ENCODE measurements at regions of chr6 and their contacts with region 1.

Region 1: DNA sequence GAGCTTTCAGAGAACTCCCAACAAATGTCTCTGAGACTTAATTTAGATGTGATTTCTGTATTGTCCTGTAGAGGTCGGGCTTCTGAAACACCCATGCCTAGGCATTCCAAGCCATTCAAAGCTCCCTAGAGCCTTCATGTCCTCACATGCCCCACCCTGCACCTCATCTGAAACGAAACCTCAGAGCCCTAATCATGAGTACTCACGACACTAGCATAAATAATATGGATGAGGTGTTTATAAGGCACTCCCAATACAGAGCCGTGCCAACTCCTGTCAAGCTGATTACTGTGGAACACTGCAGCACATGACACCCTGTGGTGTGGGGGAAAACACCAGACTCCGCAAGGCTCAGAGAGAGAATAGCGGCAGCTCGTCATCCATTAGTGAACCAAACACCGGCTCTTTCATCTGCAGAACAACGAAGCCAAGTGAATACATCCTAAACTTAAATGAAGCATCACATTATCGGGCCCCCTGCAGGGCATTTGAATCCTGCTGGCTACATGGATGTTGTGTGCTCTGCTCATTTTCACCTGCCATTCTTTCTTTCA is 83.8 kb downstream of the FNDC1 start:
- DNase-seq: peak; percentile 22
- H3K4me3 Mint-ChIP-seq: no peak overlapping the region
- H3K27ac Mint-ChIP-seq: no peak overlapping the region
- H3K4me1 Mint-ChIP-seq: no peaks in the 10 kb centered on the region
- H3K27me3 Mint-ChIP-seq: peaks cover 12% of the 10 kb centered on the region

Region 2: GRCh38 chr6:159008656-159009288 is 244.3 kb before region 1 on chr6:
- CTCF ChIA-PET with region 1: no interaction called
- intact Hi-C with region 1: loop called (anchors 10 kb)
- DNase-seq: no peak
- H3K4me3 Mint-ChIP-seq: no peak overlapping the region
- H3K27ac Mint-ChIP-seq: no peak overlapping the region
- H3K4me1 Mint-ChIP-seq: peaks cover 29% of the 10 kb centered on the region
- H3K27me3 Mint-ChIP-seq: no peaks in the 10 kb centered on the region

Region 3: GRCh38 chr6:159463119-159463829 is 210.2 kb after region 1 on chr6:
- CTCF ChIA-PET with region 1: interaction called, 8 read pairs
- intact Hi-C with region 1: loop called (anchors 10 kb)
- DNase-seq: no peak
- H3K4me3 Mint-ChIP-seq: no peak overlapping the region
- H3K27ac Mint-ChIP-seq: no peak overlapping the region
- H3K4me1 Mint-ChIP-seq: peaks cover 2% of the 10 kb centered on the region
- H3K27me3 Mint-ChIP-seq: peaks cover 14% of the 10 kb centered on the region

Region 4: GRCh38 chr6:159540152-159540551 is 287.1 kb after region 1 on chr6:
- CTCF ChIA-PET with region 1: no interaction called
- intact Hi-C with region 1: no loop called
- DNase-seq: no peak
- H3K4me3 Mint-ChIP-seq: no peak overlapping the region
- H3K27ac Mint-ChIP-seq: no peak overlapping the region
- H3K4me1 Mint-ChIP-seq: no peaks in the 10 kb centered on the region
- H3K27me3 Mint-ChIP-seq: peaks cover 2% of the 10 kb centered on the region

Region 5: GRCh38 chr6:159608961-159609651 is 356.1 kb after region 1 on chr6:
- CTCF ChIA-PET with region 1: interaction called, 3 read pairs
- intact Hi-C with region 1: loop called (anchors 5 kb)
- DNase-seq: peak; percentile 51
- H3K4me3 Mint-ChIP-seq: no peak overlapping the region
- H3K27ac Mint-ChIP-seq: no peak overlapping the region
- H3K4me1 Mint-ChIP-seq: no peaks in the 10 kb centered on the region
- H3K27me3 Mint-ChIP-seq: no peaks in the 10 kb centered on the region

Region 6: GRCh38 chr6:159654483-159655098 is 401.6 kb after region 1 on chr6:
- CTCF ChIA-PET with region 1: interaction called, 17 read pairs
- intact Hi-C with region 1: loop called (anchors 1 kb)
- DNase-seq: no peak
- H3K4me3 Mint-ChIP-seq: no peak overlapping the region
- H3K27ac Mint-ChIP-seq: no peak overlapping the region
- H3K4me1 Mint-ChIP-seq: no peaks in the 10 kb centered on the region
- H3K27me3 Mint-ChIP-seq: no peaks in the 10 kb centered on the region

Measured in activated naive CD4-positive, alpha-beta T cell treated with anti-CD3 and anti-CD28 coated beads for 36 hours (primary cell).